Activated CD4-positive, alpha-beta memory T cell treated with anti-CD3 and anti-CD28 coated beads, Interleukin-2, amount 10 ng/mL, durations not matched to agents 7 days and 5 days (primary cell): ENCODE measurements at regions of chr2 and their contacts with region 1.

Region 1: GRCh38 chr2:197434541-197435513 is at the start of gene SF3B1:
- DNase-seq: peak; percentile 99
- H3K4me3 Mint-ChIP-seq: peak within 1 kb of the TSS; percentile 84
- H3K27ac Mint-ChIP-seq: peak within 1 kb of the TSS; percentile 100
- H3K4me1 Mint-ChIP-seq: peaks cover 50% of the 10 kb centered on the region
- H3K27me3 Mint-ChIP-seq: no peaks in the 10 kb centered on the region
- total RNA-seq, gene SF3B1: 292 to 304 TPM

Region 2: DNA sequence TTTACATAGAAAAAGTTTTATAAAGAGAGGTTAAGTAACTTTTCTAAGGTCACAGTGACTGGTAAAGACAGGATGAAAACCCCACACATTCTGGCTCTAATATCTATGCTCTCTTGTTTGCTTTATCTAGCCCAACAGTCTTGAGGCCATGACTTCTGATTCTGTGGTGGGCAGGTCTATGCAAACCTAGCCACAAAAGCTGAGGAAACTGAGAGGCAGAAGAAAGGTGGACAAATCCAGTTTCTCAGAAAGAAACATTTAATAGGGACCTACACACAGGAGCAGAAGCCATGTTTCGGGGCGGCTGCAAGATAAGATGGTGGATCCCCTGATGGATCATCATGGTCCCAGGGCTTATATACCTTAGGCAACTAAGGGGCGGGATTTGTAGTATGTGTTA is 43.0 kb after region 1 on chr2:
- CTCF ChIA-PET with region 1: no interaction called
- POLR2A ChIA-PET with region 1: interaction called, 11 read pairs
- DNase-seq: no peak
- H3K4me3 Mint-ChIP-seq: no peak overlapping the region
- H3K27ac Mint-ChIP-seq: no peak overlapping the region
- H3K4me1 Mint-ChIP-seq: peaks cover 14% of the 10 kb centered on the region
- H3K27me3 Mint-ChIP-seq: no peaks in the 10 kb centered on the region

Region 3: DNA sequence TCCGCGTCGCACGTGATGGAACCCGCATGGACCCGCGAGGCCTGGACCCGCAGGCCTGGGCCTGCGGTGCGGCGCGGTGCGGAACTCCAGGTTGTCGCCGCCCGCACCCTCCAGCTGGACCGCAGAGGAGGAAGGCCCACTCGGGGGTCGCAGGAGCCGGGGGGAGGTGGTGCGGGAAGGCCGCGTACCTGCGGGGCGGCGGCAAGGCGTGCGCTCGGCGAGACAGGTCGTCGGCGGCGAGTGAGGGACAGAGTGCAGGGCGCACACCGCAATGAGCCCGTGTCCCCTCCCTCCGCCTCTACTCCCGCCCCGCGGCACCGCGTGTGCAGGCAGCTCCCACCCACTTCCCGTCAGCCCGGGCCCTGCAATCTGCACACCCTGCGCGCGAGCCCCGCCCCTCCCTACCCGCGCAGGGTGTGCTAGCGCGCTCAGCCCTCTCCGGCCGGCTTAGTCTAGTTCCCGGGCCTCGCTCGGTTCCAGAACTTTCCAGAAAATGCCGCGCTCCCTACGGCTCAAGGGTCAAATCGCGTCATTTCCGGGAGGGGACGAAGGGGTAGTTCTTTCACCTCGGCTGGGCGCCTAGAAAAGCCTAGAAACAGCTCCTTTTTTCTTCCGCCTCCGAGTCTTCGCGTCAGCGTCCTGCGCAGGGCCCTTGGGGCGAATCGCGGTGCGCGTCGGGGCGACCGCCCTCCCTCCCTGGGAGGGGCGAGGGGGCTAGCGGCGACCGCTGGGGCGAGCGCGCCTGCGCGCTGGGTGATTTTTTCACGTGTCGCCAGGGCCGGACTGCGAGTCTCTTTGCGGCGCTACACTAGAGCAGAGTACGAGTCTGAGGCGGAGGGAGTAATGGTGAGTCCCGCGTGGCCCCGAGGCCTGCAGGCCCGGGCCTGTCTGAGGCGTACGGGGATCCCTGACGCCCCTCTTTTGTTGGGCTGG is 65.0 kb after region 1 on chr2 and contains the starts of genes HSPD1 and HSPE1:
- CTCF ChIA-PET with region 1: interaction called, 3 read pairs
- POLR2A ChIA-PET with region 1: interaction called, 115 read pairs
- DNase-seq: peak; percentile 98
- H3K4me3 Mint-ChIP-seq: peak within 1 kb of the TSS; percentile 92
- H3K27ac Mint-ChIP-seq: peak within 1 kb of the TSS; percentile 97
- H3K4me1 Mint-ChIP-seq: peaks cover 60% of the 10 kb centered on the region
- H3K27me3 Mint-ChIP-seq: no peaks in the 10 kb centered on the region
- total RNA-seq, gene HSPD1: 227 to 229 TPM
- total RNA-seq, gene HSPE1: 85.9 to 92.6 TPM

Region 4: DNA sequence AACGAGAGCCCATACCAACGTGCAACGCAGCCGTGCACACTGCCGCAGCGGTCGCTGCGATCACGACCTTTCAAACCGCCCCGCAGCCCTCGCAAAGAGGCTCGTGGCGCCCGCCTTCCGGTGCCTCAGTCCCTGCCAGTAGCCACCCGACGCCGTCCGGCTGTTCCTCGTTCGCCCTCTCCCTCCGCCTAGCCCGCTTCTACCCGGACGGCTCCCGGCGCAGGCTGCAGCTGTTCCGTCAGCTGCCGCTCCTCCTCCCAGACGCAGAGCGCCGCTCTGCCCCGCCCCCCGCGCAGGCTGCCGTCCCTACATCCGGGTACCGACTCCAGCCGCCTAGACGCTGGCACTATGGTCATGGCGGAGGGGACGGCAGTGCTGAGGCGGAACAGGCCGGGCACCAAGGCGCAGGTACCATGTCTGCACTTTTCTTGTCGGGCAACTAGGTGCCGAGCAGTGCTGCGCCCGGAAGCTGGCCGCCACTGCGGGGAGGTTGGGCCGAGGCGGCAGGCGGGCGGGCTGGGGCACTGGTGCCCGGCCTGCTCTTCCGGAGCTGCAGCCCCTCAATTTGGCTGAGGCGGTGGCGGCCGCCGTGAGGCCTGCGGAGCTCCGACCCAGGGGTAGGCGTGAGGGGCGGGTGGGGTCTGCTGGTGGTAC is 81.0 kb after region 1 on chr2 and contains the start of gene MOB4:
- CTCF ChIA-PET with region 1: no interaction called
- POLR2A ChIA-PET with region 1: interaction called, 35 read pairs
- DNase-seq: peak; percentile 95
- H3K4me3 Mint-ChIP-seq: peak within 1 kb of the TSS; percentile 96
- H3K27ac Mint-ChIP-seq: peak within 1 kb of the TSS; percentile 81
- H3K4me1 Mint-ChIP-seq: peaks cover 33% of the 10 kb centered on the region
- H3K27me3 Mint-ChIP-seq: no peaks in the 10 kb centered on the region
- total RNA-seq, gene MOB4: 23.5 to 24.8 TPM